GM12878 (cell line): ENCODE measurements at regions of chr14 and their contacts with region 1.

Region 1: DNA sequence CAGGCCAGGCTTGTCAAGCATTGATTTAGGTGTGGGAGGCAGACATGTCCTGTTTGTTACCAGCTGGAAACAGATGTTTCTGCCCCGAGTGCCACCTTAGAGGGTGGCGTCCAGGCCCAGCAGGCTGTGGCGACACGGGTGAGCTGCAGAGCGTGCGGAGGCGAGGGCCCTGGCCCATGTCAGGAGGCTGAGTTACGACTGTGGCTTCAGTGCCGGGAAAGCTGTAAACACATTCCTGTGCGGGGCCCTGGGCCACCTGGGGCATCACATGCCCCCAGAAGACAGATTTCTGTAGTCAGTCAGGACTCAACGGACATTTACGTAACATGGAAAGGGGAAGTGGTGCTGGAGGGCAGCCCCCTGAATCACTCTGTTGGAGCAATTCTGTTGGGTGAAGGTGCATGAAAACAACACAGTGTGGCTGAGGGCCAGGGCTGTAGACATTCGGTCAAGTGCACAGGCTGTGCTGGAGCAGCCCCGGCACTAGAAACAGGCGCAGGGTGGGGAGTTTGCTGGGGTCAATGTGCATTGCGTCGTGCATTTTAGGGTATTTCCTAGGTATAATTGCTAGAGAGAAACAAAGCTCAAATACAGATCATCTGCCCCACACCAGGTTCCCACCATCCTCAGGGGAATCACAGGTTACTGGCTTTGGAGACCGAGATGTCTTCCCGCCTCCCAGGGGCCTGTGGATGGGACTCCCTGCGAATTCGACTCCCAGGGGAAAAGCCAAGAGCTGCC is 291.8 kb downstream of the TMEM121 start:
- DNase-seq: peak; percentile 71
- ATAC-seq: peak; percentile 95
- H3K4me3 ChIP-seq: no peak overlapping the region
- H3K27ac ChIP-seq: peak overlapping the region; percentile 31
- H3K4me1 ChIP-seq: peaks cover 16% of the 10 kb centered on the region
- H3K27me3 ChIP-seq: no peaks in the 10 kb centered on the region
- CTCF ChIP-seq: no peak
- EP300 ChIP-seq: peak in 1 of 2 experiments; percentile 31; a peak in 1 of 4 replicates
- POLR2A ChIP-seq: no peak
- RAD21 ChIP-seq: no peak

Region 2: DNA sequence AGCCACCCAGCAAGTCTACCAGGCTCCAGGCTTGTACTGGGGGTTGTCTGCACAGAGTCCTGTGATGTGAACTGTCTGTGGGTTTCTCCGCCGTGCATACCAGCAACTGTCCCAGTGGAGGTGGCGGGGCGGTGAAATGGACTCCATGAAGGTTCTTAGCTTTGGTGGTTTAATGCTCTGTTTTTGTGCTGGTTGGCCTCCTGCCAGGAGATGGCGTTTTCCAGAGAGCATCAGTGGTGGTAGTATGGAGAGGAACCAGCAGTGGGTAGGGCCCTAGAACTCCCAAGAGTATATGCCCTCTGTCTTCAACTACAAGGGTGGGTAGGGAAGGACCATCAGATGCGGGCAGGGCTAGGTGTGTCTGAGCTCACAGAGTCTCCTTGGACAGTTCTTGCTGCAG is 12.0 kb after region 1 on chr14:
- CTCF ChIA-PET with region 1: interaction called, 14 read pairs
- POLR2A ChIA-PET with region 1: no interaction called
- RAD21 ChIA-PET with region 1: interaction called, 8 read pairs
- SMC1A ChIA-PET with region 1: interaction called, 18 read pairs
- in situ Hi-C with region 1: no loop called
- intact Hi-C with region 1: no loop called
- DNase-seq: no peak
- ATAC-seq: no peak
- H3K4me3 ChIP-seq: no peak overlapping the region
- H3K27ac ChIP-seq: no peak overlapping the region
- H3K4me1 ChIP-seq: no peaks in the 10 kb centered on the region
- H3K27me3 ChIP-seq: no peaks in the 10 kb centered on the region
- CTCF ChIP-seq: no peak
- EP300 ChIP-seq: no peak
- POLR2A ChIP-seq: no peak
- RAD21 ChIP-seq: no peak